Dorsolateral prefrontal cortex (tissue), 120 donors: ENCODE measurements at regions of chr10 and their contacts with region 1.

Region 1: GRCh38 chr10:68526626-68527307 is 556 bp downstream of the SLC25A16 start:
- DNase-seq: no peak
- H3K4me3 ChIP-seq: peak overlapping the region; percentile 79 to 100 (median 96)
- H3K27ac ChIP-seq: peak overlapping the region; percentile 63 to 97 (median 91)
- H3K27me3 ChIP-seq: no peaks in the 10 kb centered on the region
- CTCF ChIP-seq: no peak

Region 2: DNA sequence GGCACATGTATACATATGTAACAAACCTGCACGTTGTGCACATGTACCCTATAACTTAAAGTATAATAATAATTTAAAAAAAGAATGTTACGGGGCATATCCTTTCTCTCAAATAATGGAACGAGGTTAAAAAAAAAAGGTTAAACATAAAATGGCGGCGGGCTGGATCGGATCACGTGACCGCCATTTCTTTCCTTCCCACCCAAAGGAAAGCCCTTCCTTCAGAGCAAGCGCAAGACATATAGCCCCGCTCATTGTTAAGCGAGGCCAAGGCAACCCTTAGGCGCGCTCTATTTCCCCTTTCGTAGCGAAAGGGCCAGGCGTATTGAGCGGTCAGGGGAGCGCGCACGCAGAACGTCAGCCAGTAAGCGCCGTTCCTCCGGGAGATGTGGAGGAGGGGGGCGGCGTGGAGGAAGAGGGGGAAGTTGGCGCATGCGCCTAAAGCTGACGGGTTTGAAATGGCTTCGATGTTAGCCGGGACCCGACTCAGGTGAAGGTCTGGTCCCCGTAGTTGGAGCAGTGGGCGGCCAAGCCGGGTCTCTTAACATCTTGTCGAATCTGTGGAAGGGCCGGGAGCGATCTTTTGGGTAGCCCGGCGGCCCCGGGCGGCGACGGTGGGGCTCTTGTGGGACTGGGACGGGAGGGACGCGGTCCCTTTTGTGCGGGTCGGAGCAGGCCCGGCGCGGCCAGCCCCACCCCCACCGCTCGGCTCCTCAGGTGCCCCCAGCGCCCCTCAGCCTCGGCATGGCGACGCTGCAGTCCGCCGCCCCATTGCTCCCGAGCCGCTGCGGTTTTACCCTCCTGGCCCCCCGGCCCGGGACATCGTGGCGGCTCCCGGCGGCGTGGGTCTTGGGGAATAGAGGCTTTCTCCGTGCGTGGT is 194.3 kb after region 1 on chr10 and contains the start of gene CCAR1:
- intact Hi-C with region 1: loop called (anchors 1 to 2 kb)
- DNase-seq: peak; percentile 93 to 97 (median 95)
- H3K4me3 ChIP-seq: peak within 1 kb of the TSS; percentile 67 to 100 (median 96)
- H3K27ac ChIP-seq: peak within 1 kb of the TSS; percentile 79 to 99 (median 97)
- H3K27me3 ChIP-seq: no peaks in the 10 kb centered on the region
- CTCF ChIP-seq: peak in 21 of 56 donors; percentile 9 to 49 (median 26)
- total RNA-seq, gene CCAR1: 43.8 to 95.7 (median 69.5) TPM